ENCODE measurements at regions of chr20 and their contacts with region 1.

Region 1: GRCh38 chr20:32674362-32674789 is 635 bp upstream of the C20orf203 start:
- DNase-seq: no peak
- H3K4me3 ChIP-seq: no peak overlapping the region
- H3K27ac ChIP-seq: no peak overlapping the region
- H3K4me1 ChIP-seq: no peaks in the 10 kb centered on the region
- H3K27me3 ChIP-seq: no peaks in the 10 kb centered on the region
- CTCF ChIP-seq: peak; percentile 73

Region 2: DNA sequence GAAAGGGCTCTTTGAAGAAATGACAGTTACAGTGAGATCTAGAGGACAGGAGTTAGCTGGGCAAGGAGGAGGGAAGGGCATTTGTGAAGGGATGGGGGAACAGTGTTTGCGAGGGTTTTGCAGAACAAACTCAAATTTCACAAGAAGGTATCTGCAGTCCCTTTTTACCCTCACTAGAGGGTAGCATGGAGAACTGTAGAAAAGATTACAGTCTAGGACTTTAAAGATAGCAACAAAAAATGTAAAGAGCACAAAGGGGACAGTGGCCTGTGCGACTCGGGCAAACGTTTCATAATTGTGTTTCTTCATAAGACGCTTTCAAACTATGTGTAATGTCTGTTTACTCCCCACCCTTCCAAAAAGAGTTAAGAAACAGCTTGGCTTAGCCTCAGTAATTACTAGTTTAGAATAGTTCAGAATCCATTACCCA is 337.4 kb before region 1 on chr20:
- intact Hi-C with region 1: no loop called
- DNase-seq: no peak
- H3K4me3 ChIP-seq: no peak overlapping the region
- H3K27ac ChIP-seq: no peak overlapping the region
- H3K4me1 ChIP-seq: peaks cover 51% of the 10 kb centered on the region
- H3K27me3 ChIP-seq: no peaks in the 10 kb centered on the region
- CTCF ChIP-seq: peak; percentile 65

Region 3: DNA sequence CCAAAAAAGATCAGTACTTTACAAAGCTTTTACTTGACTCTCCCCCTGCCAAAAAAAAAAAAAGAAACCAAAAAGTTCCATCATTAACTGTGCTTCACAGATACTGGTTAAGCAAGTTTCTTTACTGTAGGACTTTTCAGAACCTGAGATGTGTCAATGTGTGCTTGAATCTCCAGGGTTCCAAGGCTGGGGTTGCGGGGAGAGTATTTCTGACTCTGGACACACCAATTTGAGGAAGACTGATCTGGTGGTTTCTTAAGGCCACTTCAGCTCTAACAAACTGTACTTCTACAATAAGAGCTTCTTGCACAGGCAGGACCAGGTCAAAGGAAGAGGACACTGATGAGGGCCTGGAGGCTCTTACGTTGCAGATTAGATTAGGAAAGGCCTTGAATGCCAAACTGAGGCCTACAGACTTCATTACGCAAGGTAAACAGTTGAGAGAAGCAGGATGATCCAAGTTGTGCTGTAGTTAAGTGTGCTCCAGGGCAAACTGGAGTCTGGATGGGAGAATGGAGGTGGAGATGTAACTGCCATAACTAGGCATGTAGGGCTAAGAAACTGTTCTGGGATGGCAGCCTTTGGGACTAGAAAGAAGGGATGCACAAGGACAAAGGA is 44.5 kb after region 1 on chr20:
- intact Hi-C with region 1: no loop called
- DNase-seq: no peak
- H3K4me3 ChIP-seq: no peak overlapping the region
- H3K27ac ChIP-seq: no peak overlapping the region
- H3K4me1 ChIP-seq: peaks cover 3% of the 10 kb centered on the region
- H3K27me3 ChIP-seq: no peaks in the 10 kb centered on the region
- CTCF ChIP-seq: no peak

Region 4: DNA sequence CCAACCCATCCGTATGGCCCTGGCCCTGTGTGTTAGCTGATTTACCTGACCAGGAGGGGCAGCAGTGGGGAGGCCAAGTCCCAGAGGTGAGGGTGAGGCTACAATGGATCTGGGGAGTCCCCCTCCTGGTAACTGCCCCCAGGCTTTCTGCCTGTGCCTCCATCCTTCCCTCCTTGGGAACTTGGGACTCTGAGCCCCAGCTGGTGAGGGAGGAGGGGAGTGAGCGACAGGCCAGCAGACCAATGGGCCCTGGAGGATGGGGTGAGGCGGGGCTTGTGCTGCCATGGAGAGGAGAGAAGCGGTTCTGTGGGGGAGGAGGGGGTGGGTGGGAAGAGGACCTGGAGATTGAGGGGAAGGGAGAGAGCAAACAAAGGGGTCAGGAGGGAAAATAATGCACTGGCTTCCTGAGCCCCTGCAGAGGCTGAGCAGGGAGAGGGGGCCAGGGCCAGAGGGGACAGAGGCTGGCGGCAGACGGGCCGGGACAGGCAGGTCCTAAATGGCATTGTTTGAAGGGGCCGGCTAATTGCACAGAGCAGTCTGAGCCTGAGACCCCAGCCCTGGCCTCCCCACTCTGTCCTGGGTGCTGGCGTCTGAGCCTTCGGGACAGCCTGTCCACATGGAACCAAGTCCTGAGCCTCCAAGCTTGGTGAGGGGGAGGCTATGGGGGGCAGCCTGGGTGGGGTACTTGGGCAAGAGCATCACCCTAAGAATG is 105.3 kb after region 1 on chr20:
- intact Hi-C with region 1: loop called (anchors 5 kb)
- DNase-seq: no peak
- H3K4me3 ChIP-seq: no peak overlapping the region
- H3K27ac ChIP-seq: no peak overlapping the region
- H3K4me1 ChIP-seq: peaks cover 8% of the 10 kb centered on the region
- H3K27me3 ChIP-seq: no peaks in the 10 kb centered on the region
- CTCF ChIP-seq: no peak

Measured in left ventricle myocardium inferior (tissue), 1 donor.